ENCODE measurements at regions of chr12 and their contacts with region 1.

Region 1: GRCh38 chr12:2783936-2784600 is 10.7 kb upstream of the FKBP4 start:
- DNase-seq: peak; percentile 66
- ATAC-seq: peak; percentile 84
- H3K4me3 ChIP-seq: peak overlapping the region in 4 of 5 experiments; percentile 20 to 50 (median 38)
- H3K4me3 Mint-ChIP-seq: peak overlapping the region; percentile 90
- H3K27ac ChIP-seq: no peak overlapping the region
- H3K27ac Mint-ChIP-seq: no peak overlapping the region
- H3K4me1 ChIP-seq: peaks cover 6 to 8% of the 10 kb centered on the region in 2 donors
- H3K4me1 Mint-ChIP-seq: peaks cover 13% of the 10 kb centered on the region
- H3K27me3 ChIP-seq: peaks cover 0 to 16% (median 2%) of the 10 kb centered on the region in 4 experiments
- H3K27me3 Mint-ChIP-seq: peaks cover 21% of the 10 kb centered on the region
- CTCF ChIP-seq: peak; percentile 97

Region 2: DNA sequence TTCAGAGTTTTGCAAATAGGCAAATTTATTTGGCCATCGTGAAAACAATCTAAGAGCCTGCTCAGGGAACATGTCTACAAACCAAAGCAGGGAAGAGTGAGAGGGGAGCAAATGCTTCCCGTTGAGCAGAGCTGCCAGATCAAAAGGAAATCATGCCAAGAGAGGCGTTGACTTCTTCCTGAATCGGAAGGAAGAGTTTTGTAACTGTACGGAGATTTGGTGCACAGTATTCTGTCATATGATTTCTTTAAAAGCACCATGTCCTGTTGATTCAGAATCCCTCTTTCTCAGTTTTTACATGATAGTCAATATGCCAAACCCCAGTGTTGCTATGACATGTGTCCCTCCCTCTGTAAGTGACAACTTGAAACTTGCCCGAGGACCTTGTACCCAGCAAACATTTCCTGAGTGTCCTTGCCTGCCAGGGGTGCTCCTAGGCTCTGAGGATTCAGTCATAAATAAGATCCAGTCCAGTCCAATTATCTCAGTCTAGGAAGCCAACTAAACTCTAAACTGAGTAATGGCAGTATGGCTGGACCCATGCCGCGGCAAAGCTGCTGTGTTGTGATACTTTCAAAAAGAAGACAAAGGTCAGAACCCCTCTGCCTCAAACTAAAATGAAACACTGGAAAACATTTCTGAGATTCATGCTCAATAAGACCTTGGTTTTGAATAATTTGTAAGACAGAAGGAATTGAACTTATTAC is 289.4 kb before region 1 on chr12:
- CTCF ChIA-PET with region 1: no interaction called
- POLR2A ChIA-PET with region 1: no interaction called
- intact Hi-C with region 1: no loop called
- DNase-seq: no peak
- ATAC-seq: no peak
- H3K4me3 ChIP-seq: no peak overlapping the region
- H3K4me3 Mint-ChIP-seq: no peak overlapping the region
- H3K27ac ChIP-seq: no peak overlapping the region
- H3K27ac Mint-ChIP-seq: no peak overlapping the region
- H3K4me1 ChIP-seq: no peaks in the 10 kb centered on the region
- H3K4me1 Mint-ChIP-seq: no peaks in the 10 kb centered on the region
- H3K27me3 ChIP-seq: peaks cover 0 to 3% (median 1%) of the 10 kb centered on the region in 4 experiments
- H3K27me3 Mint-ChIP-seq: peaks cover 18% of the 10 kb centered on the region
- CTCF ChIP-seq: no peak

Region 3: GRCh38 chr12:2682296-2683251 is 101.5 kb before region 1 on chr12:
- CTCF ChIA-PET with region 1: interaction called, 11 read pairs
- POLR2A ChIA-PET with region 1: no interaction called
- intact Hi-C with region 1: no loop called
- DNase-seq: peak; percentile 42
- ATAC-seq: peak; percentile 31
- H3K4me3 ChIP-seq: no peak overlapping the region
- H3K4me3 Mint-ChIP-seq: no peak overlapping the region
- H3K27ac ChIP-seq: no peak overlapping the region
- H3K27ac Mint-ChIP-seq: peak overlapping the region; percentile 78
- H3K4me1 ChIP-seq: peaks cover 0 to 4% of the 10 kb centered on the region in 2 donors
- H3K4me1 Mint-ChIP-seq: no peaks in the 10 kb centered on the region
- H3K27me3 ChIP-seq: no peaks in the 10 kb centered on the region
- H3K27me3 Mint-ChIP-seq: no peaks in the 10 kb centered on the region
- CTCF ChIP-seq: peak; percentile 51

Region 4: GRCh38 chr12:2691006-2691344 is 93.1 kb before region 1 on chr12:
- CTCF ChIA-PET with region 1: interaction called, 4 read pairs
- POLR2A ChIA-PET with region 1: no interaction called
- intact Hi-C with region 1: loop called (anchors 1 kb)
- DNase-seq: peak; percentile 66
- ATAC-seq: peak; percentile 75
- H3K4me3 ChIP-seq: peak overlapping the region; percentile 42 to 78 (median 72)
- H3K4me3 Mint-ChIP-seq: peak overlapping the region; percentile 93
- H3K27ac ChIP-seq: peak overlapping the region in 1 of 2 donors; percentile 66
- H3K27ac Mint-ChIP-seq: peak overlapping the region; percentile 76
- H3K4me1 ChIP-seq: peaks cover 10 to 16% of the 10 kb centered on the region in 2 donors
- H3K4me1 Mint-ChIP-seq: peaks cover 29% of the 10 kb centered on the region
- H3K27me3 ChIP-seq: peaks cover 0 to 5% (median 2%) of the 10 kb centered on the region in 4 experiments
- H3K27me3 Mint-ChIP-seq: peaks cover 26% of the 10 kb centered on the region
- CTCF ChIP-seq: no peak

Region 5: GRCh38 chr12:2739817-2740641 is 44.0 kb before region 1 on chr12:
- CTCF ChIA-PET with region 1: no interaction called
- POLR2A ChIA-PET with region 1: no interaction called
- intact Hi-C with region 1: no loop called
- DNase-seq: no peak
- ATAC-seq: no peak
- H3K4me3 ChIP-seq: no peak overlapping the region
- H3K4me3 Mint-ChIP-seq: no peak overlapping the region
- H3K27ac ChIP-seq: no peak overlapping the region
- H3K27ac Mint-ChIP-seq: no peak overlapping the region
- H3K4me1 ChIP-seq: no peaks in the 10 kb centered on the region
- H3K4me1 Mint-ChIP-seq: no peaks in the 10 kb centered on the region
- H3K27me3 ChIP-seq: no peaks in the 10 kb centered on the region
- H3K27me3 Mint-ChIP-seq: peaks cover 18% of the 10 kb centered on the region
- CTCF ChIP-seq: no peak

Measured in B cell (primary cell).